ENCODE measurements at regions of chrX and their contacts with region 1.

Region 1: GRCh38 chrX:136880452-136881013 is at the start of gene RBMX:
- DNase-seq: peak; percentile 89
- H3K4me3 Mint-ChIP-seq: peak within 1 kb of the TSS; percentile 82
- H3K27ac Mint-ChIP-seq: peak within 1 kb of the TSS; percentile 94
- H3K4me1 Mint-ChIP-seq: no peaks in the 10 kb centered on the region
- H3K27me3 Mint-ChIP-seq: no peaks in the 10 kb centered on the region
- CTCF ChIP-seq: no peak
- total RNA-seq, gene RBMX: 271 and 333 TPM in 2 replicates

Region 2: DNA sequence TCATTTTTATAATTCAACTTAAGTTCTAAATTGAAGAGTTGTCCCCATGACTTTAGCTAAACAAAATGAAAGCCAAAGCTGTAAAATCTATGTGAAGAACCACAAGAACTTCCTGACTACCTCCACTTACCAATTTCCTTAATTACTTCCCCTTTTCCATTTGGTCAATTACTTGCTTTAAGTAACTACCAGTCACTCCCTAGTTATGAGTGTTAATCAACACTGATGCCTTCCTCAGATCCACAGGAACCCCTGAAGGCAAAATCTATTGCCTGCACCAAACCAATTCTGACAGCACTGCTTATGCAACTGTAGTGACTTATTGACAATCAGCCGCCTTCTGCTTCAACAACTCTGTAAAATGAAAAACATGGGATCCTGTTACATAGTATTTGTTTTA is 10.5 kb before region 1 on chrX:
- CTCF ChIA-PET with region 1: no interaction called
- POLR2A ChIA-PET with region 1: interaction called, 12 read pairs
- intact Hi-C with region 1: no loop called
- DNase-seq: no peak
- H3K4me3 Mint-ChIP-seq: no peak overlapping the region
- H3K27ac Mint-ChIP-seq: no peak overlapping the region
- H3K4me1 Mint-ChIP-seq: no peaks in the 10 kb centered on the region
- H3K27me3 Mint-ChIP-seq: no peaks in the 10 kb centered on the region
- CTCF ChIP-seq: no peak

Region 3: DNA sequence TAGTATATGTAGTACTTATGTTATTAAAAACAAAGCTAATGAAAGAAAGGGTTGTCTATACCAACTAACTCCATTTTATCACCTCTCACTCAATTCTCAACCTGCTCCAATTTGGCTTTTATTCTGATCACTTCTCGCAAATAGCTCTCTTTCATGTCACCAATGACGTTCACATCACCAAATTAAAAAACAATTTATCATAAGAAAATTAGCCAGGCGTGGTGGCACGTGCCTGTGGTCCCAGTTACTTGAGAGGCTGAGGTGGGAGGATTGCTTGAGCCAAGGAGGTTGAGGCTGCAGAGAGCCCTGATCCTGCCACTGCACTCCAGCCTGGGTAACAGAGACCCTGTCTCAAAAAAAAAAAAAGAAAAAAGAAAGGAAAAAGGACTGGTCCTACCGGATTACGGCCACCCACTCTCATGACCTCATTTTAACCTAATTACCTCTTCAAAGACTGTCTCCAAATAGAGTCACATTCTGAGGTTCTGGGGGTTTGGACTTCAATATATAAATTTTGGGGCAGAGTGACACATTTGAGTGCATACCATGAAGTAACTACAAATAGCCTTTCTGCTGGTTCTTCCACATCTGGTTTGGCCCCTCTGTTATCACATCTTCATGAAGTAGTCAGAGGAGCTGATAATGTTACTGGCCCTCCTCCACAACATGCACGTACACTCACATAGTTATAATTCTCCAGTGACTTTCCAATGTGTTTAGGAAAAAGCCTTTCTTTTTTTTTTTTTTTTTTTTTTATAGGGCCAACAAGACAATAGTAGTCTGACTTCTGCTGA is 15.8 kb after region 1 on chrX:
- CTCF ChIA-PET with region 1: no interaction called
- POLR2A ChIA-PET with region 1: interaction called, 13 read pairs
- intact Hi-C with region 1: no loop called
- DNase-seq: no peak
- H3K4me3 Mint-ChIP-seq: no peak overlapping the region
- H3K27ac Mint-ChIP-seq: no peak overlapping the region
- H3K4me1 Mint-ChIP-seq: no peaks in the 10 kb centered on the region
- H3K27me3 Mint-ChIP-seq: no peaks in the 10 kb centered on the region
- CTCF ChIP-seq: no peak

Region 4: GRCh38 chrX:136909706-136910564 is 29.4 kb after region 1 on chrX:
- CTCF ChIA-PET with region 1: interaction called, 3 read pairs
- POLR2A ChIA-PET with region 1: interaction called, 39 read pairs
- intact Hi-C with region 1: loop called (anchors 1 kb)
- DNase-seq: peak; percentile 93
- H3K4me3 Mint-ChIP-seq: peak overlapping the region; percentile 87
- H3K27ac Mint-ChIP-seq: peak overlapping the region; percentile 65
- H3K4me1 Mint-ChIP-seq: peaks cover 6% of the 10 kb centered on the region
- H3K27me3 Mint-ChIP-seq: no peaks in the 10 kb centered on the region
- CTCF ChIP-seq: no peak

Region 5: DNA sequence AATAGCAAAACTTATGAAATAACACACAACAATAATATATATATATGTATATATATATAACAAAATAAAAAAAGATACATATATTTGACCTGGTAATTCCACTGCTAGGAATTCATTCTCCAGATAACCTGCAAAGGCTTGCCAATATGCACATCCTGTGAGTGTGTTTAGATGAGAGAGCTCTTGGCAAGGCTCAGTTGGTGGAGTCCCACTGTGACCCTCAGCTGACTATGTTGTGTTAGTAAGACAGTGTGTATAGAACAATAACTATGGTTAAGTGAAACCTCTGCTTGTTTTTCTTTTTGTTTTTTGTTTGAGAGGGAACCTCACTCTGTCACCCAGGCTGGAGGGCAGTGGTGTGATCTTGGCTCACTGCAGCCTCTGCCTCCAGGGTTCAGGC is 39.5 kb after region 1 on chrX:
- CTCF ChIA-PET with region 1: interaction called, 3 read pairs
- POLR2A ChIA-PET with region 1: interaction called, 5 read pairs
- intact Hi-C with region 1: loop called (anchors 1 kb)
- DNase-seq: no peak
- H3K4me3 Mint-ChIP-seq: no peak overlapping the region
- H3K27ac Mint-ChIP-seq: no peak overlapping the region
- H3K4me1 Mint-ChIP-seq: no peaks in the 10 kb centered on the region
- H3K27me3 Mint-ChIP-seq: no peaks in the 10 kb centered on the region
- CTCF ChIP-seq: no peak